ENCODE measurements at regions of chr5 and their contacts with region 1.

Region 1: GRCh38 chr5:1641560-1642166 is 117.9 kb upstream of the LPCAT1 start:
- DNase-seq: peak; percentile 95
- H3K4me3 ChIP-seq: no peak overlapping the region
- H3K27ac ChIP-seq: no peak overlapping the region
- H3K4me1 ChIP-seq: peaks cover 10 to 23% (median 16%) of the 10 kb centered on the region in 4 donors
- H3K27me3 ChIP-seq: peaks cover 0 to 32% (median 19%) of the 10 kb centered on the region in 4 donors
- CTCF ChIP-seq: peak; percentile 73 to 83 (median 83)
- EP300 ChIP-seq: no peak
- POLR2A ChIP-seq: no peak

Region 2: DNA sequence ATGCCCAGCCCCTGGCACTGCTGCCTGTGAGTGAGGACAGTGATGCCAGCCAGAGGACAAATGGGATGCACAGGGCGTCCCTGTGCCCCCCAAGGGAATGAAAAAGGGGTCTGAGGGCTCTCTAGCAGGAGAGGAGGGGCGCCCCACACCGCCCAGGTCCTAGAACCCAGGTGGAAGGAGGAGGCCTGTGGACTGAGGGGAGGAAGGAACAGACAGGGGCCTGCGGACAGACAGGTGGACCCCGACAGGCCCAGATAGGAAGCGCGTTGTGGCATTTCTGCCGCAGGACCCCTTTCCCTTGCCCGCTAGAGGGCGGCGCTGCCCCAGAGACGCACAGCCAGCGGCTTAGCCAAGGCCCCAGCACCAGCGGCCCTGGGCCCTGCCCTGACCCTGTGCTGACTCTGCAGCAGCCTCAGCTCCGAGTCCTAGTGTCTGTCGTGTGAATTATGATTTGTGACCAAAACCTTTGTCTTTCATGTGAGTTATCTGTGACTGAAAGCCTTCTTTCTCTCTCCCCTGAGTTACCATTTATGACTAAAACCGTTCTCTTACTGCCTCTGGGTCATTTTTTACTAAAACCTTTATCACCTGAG is 718.3 kb before region 1 on chr5:
- intact Hi-C with region 1: loop called (anchors 10 kb)
- DNase-seq: no peak
- H3K4me3 ChIP-seq: no peak overlapping the region
- H3K27ac ChIP-seq: no peak overlapping the region
- H3K4me1 ChIP-seq: peaks cover 6 to 21% (median 20%) of the 10 kb centered on the region in 4 donors
- H3K27me3 ChIP-seq: peaks cover 0 to 27% (median 4%) of the 10 kb centered on the region in 4 donors
- CTCF ChIP-seq: peak; percentile 81 to 94 (median 82)
- EP300 ChIP-seq: no peak
- POLR2A ChIP-seq: no peak

Region 3: DNA sequence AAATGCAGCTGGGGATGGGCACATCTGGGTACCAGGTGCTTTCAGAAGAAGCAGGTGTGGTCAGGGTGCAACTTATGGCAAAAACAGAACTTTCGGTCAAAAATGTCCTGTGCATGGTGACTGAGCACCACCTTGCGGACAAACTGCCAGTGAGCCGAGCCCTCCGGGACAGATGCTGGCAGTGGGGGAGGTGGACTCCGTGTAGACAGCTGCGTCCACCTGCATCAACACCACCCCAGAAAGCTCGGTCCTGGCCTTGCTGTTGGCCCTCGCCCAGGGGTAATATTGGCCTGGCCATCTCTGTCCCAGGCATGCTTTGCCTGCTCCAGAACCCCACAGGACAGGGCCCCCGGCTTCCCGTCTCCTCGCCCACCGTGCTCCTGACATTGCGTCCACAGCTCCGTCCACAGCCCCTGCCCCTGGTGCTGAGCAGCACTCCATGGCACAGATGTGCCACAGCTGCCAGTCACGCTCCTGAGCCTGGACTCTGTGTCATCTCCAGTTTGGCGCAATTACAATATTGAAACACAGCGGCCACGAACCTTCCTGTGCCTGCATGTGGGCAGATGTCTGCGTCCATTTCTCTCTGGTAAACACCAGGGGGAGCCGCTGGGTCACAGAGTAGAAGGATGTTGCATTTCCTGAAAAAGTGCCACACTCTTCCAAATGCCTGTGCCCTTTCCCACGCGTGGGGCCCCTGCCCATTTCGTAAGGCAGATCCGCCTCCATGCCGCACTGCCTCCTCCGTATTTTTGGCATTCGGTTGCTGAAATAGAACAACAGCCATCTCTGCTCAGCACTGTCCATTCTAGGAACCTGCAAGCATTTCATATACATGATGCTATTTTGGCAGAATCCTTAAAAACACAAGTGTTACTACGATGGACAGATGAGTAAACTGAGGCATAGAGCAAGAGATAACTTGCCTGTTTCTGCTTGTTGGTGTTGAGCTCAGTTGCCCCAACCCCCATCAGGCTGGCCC is 473.6 kb before region 1 on chr5:
- intact Hi-C with region 1: loop called (anchors 2 kb)
- DNase-seq: no peak
- H3K4me3 ChIP-seq: peak overlapping the region in 2 of 4 donors; percentile 20 to 32
- H3K27ac ChIP-seq: no peak overlapping the region
- H3K4me1 ChIP-seq: peaks cover 5 to 12% (median 11%) of the 10 kb centered on the region in 4 donors
- H3K27me3 ChIP-seq: peaks cover 0 to 49% (median 0%) of the 10 kb centered on the region in 4 donors
- CTCF ChIP-seq: peak; percentile 48 to 73 (median 56)
- EP300 ChIP-seq: no peak
- POLR2A ChIP-seq: no peak

Region 4: DNA sequence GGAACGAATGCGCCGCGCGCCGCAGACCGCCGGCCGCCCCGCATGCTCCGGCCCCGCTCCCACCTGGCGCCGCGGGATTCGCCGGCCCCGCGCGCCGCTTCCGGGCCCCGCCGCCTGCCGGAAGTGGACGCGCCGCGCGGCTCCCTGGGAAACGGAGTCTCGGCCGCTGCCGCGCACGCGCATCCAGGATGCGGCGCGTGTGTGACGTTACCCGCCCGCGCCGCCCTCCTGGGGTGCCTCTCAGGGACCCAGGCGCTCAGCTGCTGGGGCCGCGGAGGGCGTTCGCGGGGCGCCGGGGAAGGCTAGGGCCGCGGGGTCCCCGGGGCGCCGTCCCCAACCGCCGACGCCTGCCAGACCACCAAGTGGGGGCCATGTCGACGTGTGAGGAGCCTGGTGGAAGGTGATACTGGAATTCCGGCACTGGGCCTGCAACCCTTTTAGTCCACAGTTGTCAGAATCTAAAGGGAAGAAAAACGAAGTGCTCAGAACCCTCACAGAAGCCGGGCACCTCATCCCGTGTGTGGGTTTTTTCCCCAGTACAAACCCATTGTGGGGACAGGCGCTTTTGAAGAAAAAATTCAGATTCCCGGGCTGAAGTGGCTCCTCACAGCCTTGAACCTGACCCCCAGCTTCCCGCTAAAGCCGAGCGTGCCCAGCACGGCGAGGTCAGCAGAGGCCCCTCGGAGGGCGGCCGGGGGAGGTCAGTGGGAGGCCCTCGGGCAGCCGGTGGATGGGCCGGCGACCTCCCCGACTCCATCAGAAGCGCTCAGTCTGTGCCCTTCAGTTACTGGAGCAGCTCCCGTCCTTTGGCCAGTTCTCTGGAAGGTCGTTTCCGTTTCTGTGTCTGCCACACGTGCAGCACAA is 296.5 kb before region 1 on chr5 and contains the start of gene CLPTM1L:
- intact Hi-C with region 1: loop called (anchors 10 kb)
- DNase-seq: peak; percentile 95
- H3K4me3 ChIP-seq: peak within 1 kb of the TSS; percentile 80 to 95 (median 92)
- H3K27ac ChIP-seq: peak within 1 kb of the TSS; percentile 83 to 92 (median 90)
- H3K4me1 ChIP-seq: peaks cover 18 to 36% (median 30%) of the 10 kb centered on the region in 4 donors
- H3K27me3 ChIP-seq: no peaks in the 10 kb centered on the region
- CTCF ChIP-seq: peak in 1 of 3 experiments; percentile 45
- EP300 ChIP-seq: no peak
- POLR2A ChIP-seq: peak; percentile 82
- total RNA-seq, gene CLPTM1L: 96.9 to 139 (median 126) TPM

Region 5: DNA sequence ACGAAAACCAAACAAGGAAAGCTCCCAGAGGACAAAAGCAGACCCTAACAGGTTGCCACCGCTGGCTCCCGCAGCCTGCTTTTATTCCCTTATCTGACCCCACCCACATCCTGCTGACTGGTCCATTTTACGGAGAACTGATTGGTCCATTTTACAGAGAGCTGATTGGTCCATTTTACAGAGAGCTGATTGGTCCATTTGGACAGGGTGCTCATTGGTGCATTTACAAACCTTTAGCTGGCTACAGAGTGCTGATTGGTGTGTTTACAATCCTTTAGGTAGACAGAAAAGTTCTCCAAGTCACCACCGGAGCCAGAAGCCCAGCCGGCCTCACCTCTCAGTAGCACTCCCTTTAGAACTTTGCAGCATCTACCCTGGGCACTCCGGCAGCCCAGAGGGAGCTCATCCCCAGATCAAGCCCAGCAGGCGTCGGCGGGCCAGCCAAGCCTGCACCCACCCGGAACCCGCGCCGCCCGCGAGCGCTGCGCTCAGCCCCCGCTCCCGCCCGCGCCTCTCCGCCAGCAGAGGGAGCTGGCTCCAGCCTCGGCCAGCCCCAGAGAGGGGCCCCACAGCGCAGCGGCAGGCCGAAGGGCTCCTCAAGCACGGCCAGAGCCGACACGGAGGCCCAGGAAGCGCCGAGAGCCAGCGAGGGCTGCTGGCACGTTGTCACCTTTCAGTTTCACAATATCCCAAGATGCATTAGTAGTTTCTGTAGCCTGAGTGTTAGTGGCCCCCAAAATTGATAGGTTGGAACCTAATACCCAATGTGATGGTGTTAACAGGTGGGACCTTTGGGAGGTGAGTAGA is 261.4 kb before region 1 on chr5:
- intact Hi-C with region 1: loop called (anchors 2 kb)
- DNase-seq: no peak
- H3K4me3 ChIP-seq: peak overlapping the region; percentile 1 to 42 (median 21)
- H3K27ac ChIP-seq: no peak overlapping the region
- H3K4me1 ChIP-seq: peaks cover 4 to 11% (median 10%) of the 10 kb centered on the region in 4 donors
- H3K27me3 ChIP-seq: peaks cover 0 to 53% (median 5%) of the 10 kb centered on the region in 4 donors
- CTCF ChIP-seq: peak; percentile 55 to 68 (median 57)
- EP300 ChIP-seq: no peak
- POLR2A ChIP-seq: no peak

Region 6: DNA sequence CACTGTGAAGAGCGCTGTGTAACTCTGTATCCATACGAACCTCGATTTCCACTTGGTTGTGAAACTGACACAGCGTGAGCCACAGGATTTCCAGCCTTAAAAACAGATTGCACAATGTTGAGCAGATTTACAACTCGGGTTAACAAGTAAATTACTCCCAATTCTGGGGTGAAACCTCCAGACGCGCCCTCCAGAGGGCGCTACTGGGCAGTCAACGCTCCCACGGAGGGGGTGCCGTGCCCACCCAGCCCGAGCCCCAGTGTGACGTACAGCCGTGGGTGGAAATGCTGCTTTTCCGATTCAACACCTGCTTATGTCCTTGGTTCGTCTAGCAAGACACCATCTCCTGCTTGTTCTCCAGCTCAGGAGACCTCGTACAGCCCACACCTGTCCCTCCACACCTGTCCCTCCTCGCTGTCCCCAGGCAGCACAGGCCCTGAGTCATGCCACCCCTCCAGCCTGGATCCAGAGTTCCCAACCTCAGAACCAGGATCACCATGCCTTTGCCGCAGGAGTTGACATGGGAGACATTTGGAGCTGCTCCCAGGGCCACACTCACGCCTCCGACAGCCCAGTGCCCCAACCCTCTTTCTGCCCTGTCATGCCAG is 162.0 kb before region 1 on chr5:
- intact Hi-C with region 1: loop called (anchors 5 kb)
- DNase-seq: no peak
- H3K4me3 ChIP-seq: no peak overlapping the region
- H3K27ac ChIP-seq: peak overlapping the region in 1 of 4 donors; percentile 39
- H3K4me1 ChIP-seq: peaks cover 0 to 8% (median 4%) of the 10 kb centered on the region in 4 donors
- H3K27me3 ChIP-seq: no peaks in the 10 kb centered on the region
- CTCF ChIP-seq: peak; percentile 55 to 65 (median 59)
- EP300 ChIP-seq: no peak
- POLR2A ChIP-seq: no peak

Region 7: GRCh38 chr5:1523771-1524480 is 117.7 kb before region 1 on chr5 and contains the start of gene LPCAT1:
- intact Hi-C with region 1: loop called (anchors 10 kb)
- DNase-seq: no peak
- H3K4me3 ChIP-seq: peak within 1 kb of the TSS; percentile 90 to 91 (median 90)
- H3K27ac ChIP-seq: peak within 1 kb of the TSS; percentile 91 to 92 (median 92)
- H3K4me1 ChIP-seq: peaks cover 9 to 30% (median 26%) of the 10 kb centered on the region in 4 donors
- H3K27me3 ChIP-seq: no peaks in the 10 kb centered on the region
- CTCF ChIP-seq: peak in 1 of 3 experiments; percentile 27
- EP300 ChIP-seq: no peak
- POLR2A ChIP-seq: no peak
- total RNA-seq, gene LPCAT1: 22.5 to 51.7 (median 35.0) TPM

Region 8: GRCh38 chr5:1997640-1998347 is 356.1 kb after region 1 on chr5:
- intact Hi-C with region 1: no loop called
- DNase-seq: no peak
- H3K4me3 ChIP-seq: no peak overlapping the region
- H3K27ac ChIP-seq: no peak overlapping the region
- H3K4me1 ChIP-seq: no peaks in the 10 kb centered on the region
- H3K27me3 ChIP-seq: peaks cover 0 to 34% (median 0%) of the 10 kb centered on the region in 4 donors
- CTCF ChIP-seq: no peak
- EP300 ChIP-seq: no peak
- POLR2A ChIP-seq: no peak